Activated CD4-positive, alpha-beta T cell treated with anti-CD3 and anti-CD28 coated beads for 36 hours (primary cell): ENCODE measurements at regions of chr7 and their contacts with region 1.

Region 1: DNA sequence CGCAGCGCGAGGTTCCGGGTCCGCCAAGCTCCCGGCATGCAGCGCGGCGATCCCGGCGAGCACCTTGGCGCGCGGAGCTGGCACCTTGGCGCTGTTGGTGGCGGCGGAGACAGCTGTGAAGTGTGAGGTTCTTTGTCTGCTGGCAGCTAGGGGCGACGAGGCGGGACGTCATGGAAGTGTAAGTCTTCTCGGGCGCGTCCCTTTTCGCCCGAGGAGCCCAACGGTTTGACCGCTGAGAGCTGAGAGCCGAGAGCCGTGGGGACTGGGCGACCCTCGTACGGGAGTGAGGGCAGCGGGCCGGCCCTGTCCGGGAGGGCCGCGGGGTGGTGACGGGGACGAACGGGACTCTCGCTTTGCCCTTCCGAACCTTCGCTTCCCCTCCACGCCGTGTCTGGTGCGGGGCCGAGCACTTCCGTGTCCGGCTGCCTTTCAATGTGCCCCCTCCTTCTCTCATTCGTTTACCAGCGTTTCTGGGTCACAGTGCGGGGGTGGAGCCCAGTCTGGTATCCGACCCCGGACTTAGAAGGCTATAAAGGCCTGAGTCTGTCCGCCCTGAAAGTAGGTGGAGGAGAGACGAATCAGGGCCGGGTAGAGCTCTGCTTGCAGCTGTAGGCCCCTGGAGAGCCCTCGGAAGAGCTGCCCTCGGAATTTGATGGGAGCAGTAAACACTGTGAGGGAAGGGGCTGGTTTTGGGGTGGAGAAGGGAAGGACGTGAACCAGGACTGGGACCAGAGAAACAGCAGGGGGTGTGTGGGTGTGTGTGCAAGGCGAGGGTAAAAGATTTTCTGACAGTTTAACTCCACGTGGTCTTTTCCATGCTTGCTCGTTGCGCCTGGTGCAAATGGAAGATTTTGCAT is at the start of gene CRCP:
- DNase-seq: peak; percentile 91
- ATAC-seq: peak; percentile 91
- H3K4me3 Mint-ChIP-seq: peak within 1 kb of the TSS; percentile 95
- H3K27ac Mint-ChIP-seq: peak within 1 kb of the TSS; percentile 98
- H3K4me1 Mint-ChIP-seq: peaks cover 39% of the 10 kb centered on the region
- H3K27me3 Mint-ChIP-seq: no peaks in the 10 kb centered on the region
- total RNA-seq, gene CRCP: 24.5 to 27.2 TPM

Region 2: GRCh38 chr7:65981965-65982792 is 132.8 kb before region 1 on chr7 and contains the start of gene GUSB:
- CTCF ChIA-PET with region 1: no interaction called
- POLR2A ChIA-PET with region 1: no interaction called
- intact Hi-C with region 1: loop called in 1 of 2 experiments (anchors 2 kb)
- DNase-seq: peak; percentile 95
- ATAC-seq: peak; percentile 90
- H3K4me3 Mint-ChIP-seq: peak within 1 kb of the TSS; percentile 80
- H3K27ac Mint-ChIP-seq: peak within 1 kb of the TSS; percentile 90
- H3K4me1 Mint-ChIP-seq: peaks cover 8% of the 10 kb centered on the region
- H3K27me3 Mint-ChIP-seq: no peaks in the 10 kb centered on the region
- total RNA-seq, gene GUSB: 41.8 to 43.2 TPM

Region 3: GRCh38 chr7:66099616-66100474 is 15.2 kb before region 1 on chr7:
- CTCF ChIA-PET with region 1: interaction called, 5 read pairs
- POLR2A ChIA-PET with region 1: no interaction called
- intact Hi-C with region 1: loop called in 1 of 2 experiments (anchors 1 kb)
- DNase-seq: peak; percentile 58
- ATAC-seq: peak; percentile 89
- H3K4me3 Mint-ChIP-seq: peak overlapping the region; percentile 73
- H3K27ac Mint-ChIP-seq: peak overlapping the region; percentile 93
- H3K4me1 Mint-ChIP-seq: peaks cover 11% of the 10 kb centered on the region
- H3K27me3 Mint-ChIP-seq: no peaks in the 10 kb centered on the region

Region 4: GRCh38 chr7:66204822-66205740 is 90.1 kb after region 1 on chr7 and contains the start of gene TPST1:
- CTCF ChIA-PET with region 1: no interaction called
- POLR2A ChIA-PET with region 1: no interaction called
- intact Hi-C with region 1: loop called in 1 of 2 experiments (anchors 1 kb)
- DNase-seq: peak; percentile 88
- ATAC-seq: peak; percentile 96
- H3K4me3 Mint-ChIP-seq: peak within 1 kb of the TSS; percentile 81
- H3K27ac Mint-ChIP-seq: peak within 1 kb of the TSS; percentile 32
- H3K4me1 Mint-ChIP-seq: peaks cover 33% of the 10 kb centered on the region
- H3K27me3 Mint-ChIP-seq: peaks cover 17% of the 10 kb centered on the region
- total RNA-seq, gene TPST1: 1.0 to 1.1 TPM

Region 5: DNA sequence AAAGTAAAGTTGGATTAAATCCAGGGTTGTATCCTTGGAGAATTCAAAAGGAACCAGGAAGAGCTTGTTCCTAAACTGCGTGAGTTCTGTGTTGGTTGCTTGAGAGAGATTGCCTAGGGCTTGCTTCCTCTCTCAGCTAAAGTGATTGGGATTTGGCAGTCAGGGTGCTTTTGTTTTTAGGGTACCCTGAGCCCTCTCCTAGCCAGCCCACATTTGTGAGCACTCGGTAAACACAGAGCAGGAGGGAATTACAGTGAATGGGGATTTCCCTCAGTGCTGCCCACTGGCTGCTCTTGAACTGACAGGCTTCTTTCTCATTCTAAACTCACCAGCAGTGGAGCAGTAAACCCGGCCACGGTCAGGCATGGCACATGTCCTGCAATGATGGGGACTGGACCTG is 237.1 kb after region 1 on chr7:
- CTCF ChIA-PET with region 1: no interaction called
- POLR2A ChIA-PET with region 1: no interaction called
- intact Hi-C with region 1: no loop called
- DNase-seq: no peak
- ATAC-seq: no peak
- H3K4me3 Mint-ChIP-seq: no peak overlapping the region
- H3K27ac Mint-ChIP-seq: no peak overlapping the region
- H3K4me1 Mint-ChIP-seq: no peaks in the 10 kb centered on the region
- H3K27me3 Mint-ChIP-seq: peaks cover 2% of the 10 kb centered on the region